CD4-positive, alpha-beta memory T cell (primary cell): ENCODE measurements at regions of chr19 and their contacts with region 1.

Region 1: GRCh38 chr19:860481-861101 is 1.1 kb downstream of the CFD start:
- DNase-seq: peak in 4 of 5 donors; percentile 55 to 58 (median 56)
- H3K4me3 ChIP-seq: peak overlapping the region in 1 of 2 donors; percentile 13
- H3K4me3 Mint-ChIP-seq: no peak overlapping the region
- H3K27ac ChIP-seq: no peak overlapping the region
- H3K27ac Mint-ChIP-seq: no peak overlapping the region
- H3K4me1 ChIP-seq: peaks cover 19% of the 10 kb centered on the region
- H3K4me1 Mint-ChIP-seq: peaks cover 5 to 28% (median 16%) of the 10 kb centered on the region in 4 donors
- H3K27me3 ChIP-seq: peaks cover 3% of the 10 kb centered on the region
- H3K27me3 Mint-ChIP-seq: peaks cover 2 to 4% of the 10 kb centered on the region in 2 donors

Region 2: GRCh38 chr19:872266-872951 is 11.8 kb after region 1 on chr19:
- CTCF ChIA-PET with region 1: interaction called, 6 read pairs
- POLR2A ChIA-PET with region 1: interaction called, 15 read pairs
- intact Hi-C with region 1: loop called (anchors 1 kb)
- DNase-seq: peak; percentile 84 to 93 (median 91)
- H3K4me3 ChIP-seq: peak overlapping the region in 1 of 2 donors; percentile 51
- H3K4me3 Mint-ChIP-seq: peak overlapping the region; percentile 75 to 92 (median 84)
- H3K27ac ChIP-seq: peak overlapping the region; percentile 55
- H3K27ac Mint-ChIP-seq: peak overlapping the region; percentile 88 to 98 (median 97)
- H3K4me1 ChIP-seq: peaks cover 13% of the 10 kb centered on the region
- H3K4me1 Mint-ChIP-seq: peaks cover 4 to 16% (median 9%) of the 10 kb centered on the region in 4 donors
- H3K27me3 ChIP-seq: no peaks in the 10 kb centered on the region
- H3K27me3 Mint-ChIP-seq: no peaks in the 10 kb centered on the region

Region 3: DNA sequence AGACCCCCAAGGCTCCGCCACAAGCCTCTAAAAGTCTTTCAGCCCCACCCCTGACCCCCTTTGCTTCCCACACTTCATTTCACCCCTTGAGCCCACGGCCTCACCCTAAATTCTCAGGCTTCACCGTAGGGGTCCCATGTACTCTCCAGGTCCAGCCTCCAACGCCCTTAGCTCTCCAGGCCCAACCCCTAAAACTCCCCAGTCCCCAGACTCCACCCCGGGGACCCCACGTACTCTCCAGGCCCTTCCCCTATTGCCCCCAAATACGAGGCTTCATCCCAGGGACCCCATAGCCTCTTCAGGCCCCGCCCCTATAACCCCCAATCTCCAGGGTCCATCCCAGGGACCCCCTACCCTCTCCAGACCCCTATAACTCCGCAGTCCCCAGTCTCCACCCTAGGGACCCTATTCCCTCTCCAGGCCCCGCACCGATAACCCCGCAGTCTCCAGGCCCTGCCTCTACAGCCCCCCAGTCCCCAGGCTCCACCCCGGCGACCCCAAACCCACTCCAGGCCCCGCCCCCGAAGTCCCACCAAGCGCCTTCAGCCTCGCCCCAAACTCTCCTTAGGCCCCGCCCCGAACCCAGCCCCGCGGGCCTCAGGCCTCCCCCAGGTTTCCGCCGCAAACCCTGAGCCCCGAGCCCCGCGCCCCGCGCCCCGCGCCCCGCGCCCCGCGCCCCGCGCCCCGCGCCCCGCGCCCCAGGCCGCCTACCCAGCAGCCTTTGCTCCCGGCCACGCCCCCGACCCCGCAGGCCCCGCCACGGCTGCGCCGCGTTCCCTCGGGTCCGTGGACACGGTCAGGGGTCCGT is 31.9 kb after region 1 on chr19:
- CTCF ChIA-PET with region 1: interaction called, 17 read pairs
- POLR2A ChIA-PET with region 1: interaction called, 25 read pairs
- intact Hi-C with region 1: loop called (anchors 1 kb)
- DNase-seq: no peak
- H3K4me3 ChIP-seq: peak overlapping the region; percentile 36 to 76
- H3K4me3 Mint-ChIP-seq: peak overlapping the region; percentile 84 to 95 (median 92)
- H3K27ac ChIP-seq: peak overlapping the region; percentile 80
- H3K27ac Mint-ChIP-seq: peak overlapping the region; percentile 38 to 100 (median 88)
- H3K4me1 ChIP-seq: peaks cover 32% of the 10 kb centered on the region
- H3K4me1 Mint-ChIP-seq: peaks cover 7 to 47% (median 11%) of the 10 kb centered on the region in 4 donors
- H3K27me3 ChIP-seq: no peaks in the 10 kb centered on the region
- H3K27me3 Mint-ChIP-seq: peaks cover 0 to 3% of the 10 kb centered on the region in 2 donors

Region 4: GRCh38 chr19:913080-913748 is 52.6 kb after region 1 on chr19 and contains the start of gene R3HDM4:
- CTCF ChIA-PET with region 1: interaction called, 119 read pairs
- POLR2A ChIA-PET with region 1: interaction called, 86 read pairs
- intact Hi-C with region 1: loop called (anchors 2 kb)
- DNase-seq: peak; percentile 82 to 85 (median 85)
- H3K4me3 ChIP-seq: peak within 1 kb of the TSS; percentile 58 to 69
- H3K4me3 Mint-ChIP-seq: peak within 1 kb of the TSS; percentile 82 to 90 (median 86)
- H3K27ac ChIP-seq: peak within 1 kb of the TSS; percentile 94
- H3K27ac Mint-ChIP-seq: peak within 1 kb of the TSS; percentile 88 to 95 (median 93)
- H3K4me1 ChIP-seq: peaks cover 57% of the 10 kb centered on the region
- H3K4me1 Mint-ChIP-seq: peaks cover 13 to 42% (median 28%) of the 10 kb centered on the region in 4 donors
- H3K27me3 ChIP-seq: no peaks in the 10 kb centered on the region
- H3K27me3 Mint-ChIP-seq: peaks cover 0 to 4% of the 10 kb centered on the region in 2 donors
- total RNA-seq, gene R3HDM4: 153 to 160 TPM

Region 5: GRCh38 chr19:925526-926322 is 65.1 kb after region 1 on chr19 and contains the start of gene ARID3A:
- CTCF ChIA-PET with region 1: interaction called, 119 read pairs
- POLR2A ChIA-PET with region 1: interaction called, 86 read pairs
- intact Hi-C with region 1: loop called (anchors 1 kb)
- DNase-seq: peak; percentile 73 to 85 (median 78)
- H3K4me3 ChIP-seq: peak within 1 kb of the TSS; percentile 47 to 91
- H3K4me3 Mint-ChIP-seq: peak within 1 kb of the TSS; percentile 80 to 88 (median 84)
- H3K27ac ChIP-seq: peak within 1 kb of the TSS; percentile 64
- H3K27ac Mint-ChIP-seq: peak within 1 kb of the TSS in 6 of 7 donors; percentile 37 to 88 (median 72)
- H3K4me1 ChIP-seq: peaks cover 22% of the 10 kb centered on the region
- H3K4me1 Mint-ChIP-seq: peaks cover 8 to 21% (median 13%) of the 10 kb centered on the region in 4 donors
- H3K27me3 ChIP-seq: no peaks in the 10 kb centered on the region
- H3K27me3 Mint-ChIP-seq: peaks cover 0 to under 1% of the 10 kb centered on the region in 2 donors
- total RNA-seq, gene ARID3A: 9.2 to 9.6 TPM

Region 6: DNA sequence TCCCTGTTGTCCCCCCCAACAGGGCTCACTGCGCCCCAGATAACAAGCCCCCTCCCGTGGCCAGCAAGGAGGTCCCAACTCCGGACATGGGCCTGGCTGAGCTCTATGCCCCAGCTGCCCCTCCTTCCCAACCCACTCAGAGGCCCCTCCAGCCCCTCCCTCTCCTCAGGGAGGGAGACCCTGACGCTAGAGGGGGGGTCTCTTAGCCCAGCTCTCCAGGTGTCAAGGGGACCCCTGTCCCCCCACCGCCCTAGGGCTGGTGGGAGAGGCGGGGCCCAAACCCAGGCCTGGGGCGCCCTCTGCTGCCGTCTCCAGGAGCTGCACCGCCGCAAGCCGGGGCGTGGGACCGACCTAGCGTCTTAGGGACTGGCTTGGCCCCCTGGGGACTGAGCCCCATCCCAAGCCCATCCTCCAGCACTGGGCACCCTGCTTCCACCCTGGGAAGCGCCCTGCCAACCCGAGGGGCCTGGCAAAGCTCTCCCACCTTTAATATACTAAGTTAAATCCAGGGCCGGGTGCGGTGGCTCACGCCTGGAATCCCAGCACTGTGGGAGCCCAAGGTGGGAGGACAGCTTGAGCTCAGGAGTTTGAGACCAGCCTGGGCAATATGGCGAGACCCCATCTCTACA is 141.1 kb after region 1 on chr19:
- CTCF ChIA-PET with region 1: no interaction called
- POLR2A ChIA-PET with region 1: interaction called, 3 read pairs
- intact Hi-C with region 1: loop called (anchors 2 kb)
- DNase-seq: peak; percentile 60 to 71 (median 61)
- H3K4me3 ChIP-seq: no peak overlapping the region
- H3K4me3 Mint-ChIP-seq: no peak overlapping the region
- H3K27ac ChIP-seq: no peak overlapping the region
- H3K27ac Mint-ChIP-seq: peak overlapping the region in 1 of 7 donors; percentile 21
- H3K4me1 ChIP-seq: peaks cover 15% of the 10 kb centered on the region
- H3K4me1 Mint-ChIP-seq: peaks cover 2 to 18% (median 10%) of the 10 kb centered on the region in 4 donors
- H3K27me3 ChIP-seq: peaks cover 26% of the 10 kb centered on the region
- H3K27me3 Mint-ChIP-seq: peaks cover 17 to 19% of the 10 kb centered on the region in 2 donors

Region 7: GRCh38 chr19:1417145-1417544 is 556.6 kb after region 1 on chr19:
- CTCF ChIA-PET with region 1: no interaction called
- POLR2A ChIA-PET with region 1: no interaction called
- intact Hi-C with region 1: no loop called
- DNase-seq: no peak
- H3K4me3 ChIP-seq: no peak overlapping the region
- H3K4me3 Mint-ChIP-seq: no peak overlapping the region
- H3K27ac ChIP-seq: no peak overlapping the region
- H3K27ac Mint-ChIP-seq: peak overlapping the region in 3 of 7 donors; percentile 4 to 59 (median 51)
- H3K4me1 ChIP-seq: peaks cover 51% of the 10 kb centered on the region
- H3K4me1 Mint-ChIP-seq: peaks cover 23 to 54% (median 43%) of the 10 kb centered on the region in 4 donors
- H3K27me3 ChIP-seq: no peaks in the 10 kb centered on the region
- H3K27me3 Mint-ChIP-seq: no peaks in the 10 kb centered on the region